ENCODE measurements at regions of chr2 and their contacts with region 1.

Region 1: GRCh38 chr2:121333834-121334558 is 49.0 kb upstream of the TFCP2L1 start:
- DNase-seq: no peak

Region 2: DNA sequence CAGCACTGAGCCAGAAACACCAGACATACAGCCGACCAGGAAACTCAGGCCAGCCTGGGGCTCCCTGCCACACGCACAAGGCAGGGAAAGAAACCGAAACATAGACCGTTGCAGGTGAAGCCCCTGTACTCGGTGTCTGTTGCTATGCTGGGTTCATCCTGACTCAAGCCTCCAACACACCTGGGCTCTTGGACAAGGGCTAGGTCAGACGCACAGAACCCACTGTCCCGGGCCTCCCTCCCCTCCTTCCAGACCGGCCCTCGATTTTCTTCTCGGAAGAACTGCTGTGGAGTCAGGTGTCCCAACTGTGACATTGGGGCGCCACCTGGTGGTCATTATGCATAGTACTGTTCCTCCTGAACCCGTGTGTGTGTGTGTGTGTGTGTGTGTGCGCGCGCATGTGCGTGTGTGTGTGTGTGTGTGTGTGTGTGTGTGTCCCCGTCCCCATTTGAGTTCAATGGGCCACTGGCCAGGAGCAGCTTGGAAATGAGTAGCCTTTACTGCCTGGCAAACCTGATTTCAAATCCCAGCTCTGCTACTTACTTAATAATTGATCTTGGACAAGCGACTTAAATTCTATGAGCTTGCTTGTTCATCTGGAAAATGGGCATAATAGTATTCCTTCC is 653.7 kb before region 1 on chr2:
- in situ Hi-C with region 1: loop called (anchors 25 kb)
- DNase-seq: peak; percentile 80

Region 3: DNA sequence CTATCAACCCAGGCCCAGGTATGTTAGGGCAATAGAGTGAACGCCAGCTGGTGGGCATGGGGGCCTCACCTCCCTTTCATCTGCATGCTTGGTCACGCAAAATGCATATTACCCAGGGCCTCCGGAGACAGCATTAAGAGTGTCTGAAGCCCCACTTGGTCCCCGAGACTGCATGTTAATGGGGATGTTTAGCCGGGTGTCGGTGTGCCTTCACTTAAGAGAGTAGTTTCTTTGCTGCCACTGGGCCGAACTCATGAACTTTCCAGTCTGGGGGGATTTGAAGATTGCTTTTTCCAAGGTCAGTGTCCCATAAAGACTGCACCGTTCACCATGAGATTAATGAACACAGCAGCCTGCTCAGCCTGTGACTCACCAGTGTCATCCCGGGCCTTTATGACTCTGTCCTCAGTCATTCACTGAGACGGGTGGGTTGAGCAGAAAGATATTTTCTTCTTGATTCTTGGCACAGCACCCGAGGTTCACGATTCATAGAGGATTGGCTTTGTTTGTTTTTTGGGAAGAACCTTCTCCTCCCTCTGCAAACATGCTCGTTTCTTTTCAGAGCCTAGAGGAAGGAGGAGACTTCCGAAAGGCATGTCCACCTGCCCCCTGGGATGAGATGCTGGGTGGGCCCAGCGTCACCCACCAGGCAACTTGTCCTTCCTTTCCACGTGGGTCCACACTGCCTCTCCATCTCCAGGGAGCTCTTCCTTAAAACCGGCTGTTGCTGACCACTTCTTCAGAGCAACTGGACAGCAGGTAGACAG is 399.2 kb before region 1 on chr2:
- in situ Hi-C with region 1: no loop called
- DNase-seq: no peak

Measured in KBM-7 (cell line).